ENCODE measurements at regions of chr18 and their contacts with region 1.

Region 1: GRCh38 chr18:58529714-58530354 is 99.1 kb downstream of the ALPK2 start:
- DNase-seq: peak; percentile 54
- ATAC-seq: peak; percentile 82
- H3K4me3 Mint-ChIP-seq: no peak overlapping the region
- H3K27ac Mint-ChIP-seq: no peak overlapping the region
- H3K4me1 Mint-ChIP-seq: peaks cover 44% of the 10 kb centered on the region
- H3K27me3 Mint-ChIP-seq: no peaks in the 10 kb centered on the region
- CTCF ChIP-seq: peak; percentile 83

Region 2: DNA sequence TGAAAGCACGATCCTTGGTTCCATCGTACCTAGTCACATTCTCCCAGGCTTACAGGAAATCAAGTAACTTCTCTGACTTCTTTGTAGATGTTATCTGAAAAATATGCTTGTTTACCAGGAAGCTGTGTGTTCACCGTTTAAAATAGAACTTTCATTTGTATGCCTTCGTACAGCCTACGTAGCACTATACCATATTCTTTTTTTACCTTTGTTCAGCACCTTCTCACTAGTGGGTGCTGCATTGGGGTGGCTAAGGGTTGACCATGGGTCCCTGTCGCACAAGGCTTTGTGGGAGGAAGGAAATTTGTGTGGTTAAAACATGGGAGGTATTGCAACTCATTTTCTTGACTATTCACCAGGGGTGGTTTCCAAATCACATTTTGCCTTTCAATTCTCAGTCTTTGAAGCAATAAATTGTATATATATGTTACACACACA is 158.1 kb after region 1 on chr18:
- CTCF ChIA-PET with region 1: interaction called, 6 read pairs
- POLR2A ChIA-PET with region 1: interaction called, 11 read pairs
- intact Hi-C with region 1: no loop called
- DNase-seq: no peak
- ATAC-seq: peak; percentile 42
- H3K4me3 Mint-ChIP-seq: peak overlapping the region; percentile 50
- H3K27ac Mint-ChIP-seq: peak overlapping the region; percentile 75
- H3K4me1 Mint-ChIP-seq: peaks cover 34% of the 10 kb centered on the region
- H3K27me3 Mint-ChIP-seq: no peaks in the 10 kb centered on the region
- CTCF ChIP-seq: no peak

Region 3: GRCh38 chr18:58716060-58716756 is 186.4 kb after region 1 on chr18:
- CTCF ChIA-PET with region 1: interaction called, 9 read pairs
- POLR2A ChIA-PET with region 1: interaction called, 7 read pairs
- intact Hi-C with region 1: loop called (anchors 1 kb)
- DNase-seq: no peak
- ATAC-seq: peak; percentile 58
- H3K4me3 Mint-ChIP-seq: peak overlapping the region; percentile 29
- H3K27ac Mint-ChIP-seq: peak overlapping the region; percentile 82
- H3K4me1 Mint-ChIP-seq: peaks cover 46% of the 10 kb centered on the region
- H3K27me3 Mint-ChIP-seq: no peaks in the 10 kb centered on the region
- CTCF ChIP-seq: no peak

Region 4: GRCh38 chr18:59070181-59070912 is 540.5 kb after region 1 on chr18:
- CTCF ChIA-PET with region 1: interaction called, 9 read pairs
- POLR2A ChIA-PET with region 1: no interaction called
- intact Hi-C with region 1: loop called (anchors 2 kb)
- DNase-seq: peak; percentile 68
- ATAC-seq: peak; percentile 85
- H3K4me3 Mint-ChIP-seq: no peak overlapping the region
- H3K27ac Mint-ChIP-seq: peak overlapping the region; percentile 54
- H3K4me1 Mint-ChIP-seq: peaks cover 25% of the 10 kb centered on the region
- H3K27me3 Mint-ChIP-seq: no peaks in the 10 kb centered on the region
- CTCF ChIP-seq: peak; percentile 39

Measured in activated B cell treated with CpG ODN at 0.5 μM for 24 hours (primary cell).